HepG2 (cell line): ENCODE measurements at regions of chr18 and their contacts with region 1.

Region 1: GRCh38 chr18:35192415-35192814 is 48.4 kb upstream of the ZNF397 start:
- DNase-seq: no peak
- ATAC-seq: no peak
- H3K4me3 ChIP-seq: no peak overlapping the region
- H3K27ac ChIP-seq: no peak overlapping the region
- H3K4me1 ChIP-seq: peaks cover 10% of the 10 kb centered on the region; the same call in 1 of the 2 replicates
- H3K27me3 ChIP-seq: no peaks in the 10 kb centered on the region
- CTCF ChIP-seq: no peak
- EP300 ChIP-seq: no peak
- POLR2A ChIP-seq: no peak
- RAD21 ChIP-seq: no peak

Region 2: GRCh38 chr18:33901894-33902512 is 1290.4 kb before region 1 on chr18:
- CTCF ChIA-PET with region 1: no interaction called
- POLR2A ChIA-PET with region 1: no interaction called
- in situ Hi-C with region 1: no loop called
- intact Hi-C with region 1: no loop called
- DNase-seq: no peak
- ATAC-seq: no peak
- H3K4me3 ChIP-seq: no peak overlapping the region
- H3K27ac ChIP-seq: no peak overlapping the region
- H3K4me1 ChIP-seq: no peaks in the 10 kb centered on the region
- H3K27me3 ChIP-seq: no peaks in the 10 kb centered on the region
- CTCF ChIP-seq: no peak
- EP300 ChIP-seq: no peak
- POLR2A ChIP-seq: no peak
- RAD21 ChIP-seq: no peak

Region 3: GRCh38 chr18:35171315-35171987 is 21.0 kb before region 1 on chr18:
- CTCF ChIA-PET with region 1: no interaction called
- POLR2A ChIA-PET with region 1: no interaction called
- in situ Hi-C with region 1: no loop called
- intact Hi-C with region 1: loop called (anchors 2 kb)
- DNase-seq: peak; percentile 86
- ATAC-seq: peak; percentile 95
- H3K4me3 ChIP-seq: peak overlapping the region; percentile 22 to 55 (median 31); a peak in 5 of 6 replicates
- H3K27ac ChIP-seq: peak overlapping the region; percentile 81
- H3K4me1 ChIP-seq: peaks cover 73% of the 10 kb centered on the region
- H3K27me3 ChIP-seq: no peaks in the 10 kb centered on the region
- CTCF ChIP-seq: no peak
- EP300 ChIP-seq: peak in 1 of 2 experiments; percentile 80; a peak in 1 of 4 replicates
- POLR2A ChIP-seq: no peak
- RAD21 ChIP-seq: no peak